ENCODE measurements at regions of chr14 and their contacts with region 1.

Region 1: DNA sequence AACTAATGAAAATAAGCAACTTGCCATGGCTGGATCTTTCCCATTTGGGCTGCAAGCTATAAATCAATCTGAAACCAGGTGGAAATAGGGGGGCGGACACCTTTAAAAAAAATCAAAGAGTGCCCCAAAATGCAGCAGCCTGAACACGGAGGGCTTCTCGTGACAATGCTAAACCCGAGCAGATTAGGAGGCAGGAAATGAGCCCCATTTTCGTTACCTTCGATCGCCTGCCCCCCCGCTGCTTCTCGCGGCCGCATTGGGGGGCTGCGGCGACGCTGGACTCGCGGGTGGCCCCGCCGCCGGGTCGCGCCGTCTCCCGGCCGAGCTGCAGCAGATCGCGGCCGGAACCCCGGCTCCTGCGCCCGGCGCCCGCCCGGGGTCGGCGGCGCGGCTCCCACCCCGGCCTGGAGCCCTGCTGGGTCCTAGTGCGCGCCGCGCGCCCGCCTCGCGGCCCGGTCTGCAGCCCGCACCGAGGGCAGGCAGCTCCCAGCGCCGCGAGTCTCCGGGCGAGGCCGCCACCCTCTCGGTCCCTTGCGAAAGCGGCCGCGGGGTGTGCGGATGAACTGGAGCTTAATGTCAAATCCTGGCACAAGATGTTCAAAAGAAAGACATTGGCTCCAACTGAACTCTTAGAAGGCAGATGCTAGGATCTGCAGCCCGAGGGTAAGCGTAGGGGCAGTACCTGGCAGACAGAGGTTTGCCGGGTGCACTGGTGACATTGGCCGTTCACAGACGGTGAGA is 201.9 kb upstream of the FOXN3 start:
- DNase-seq: peak; percentile 82
- ATAC-seq: peak; percentile 38
- H3K4me3 Mint-ChIP-seq: peak overlapping the region; percentile 95
- H3K27ac Mint-ChIP-seq: peak overlapping the region; percentile 94
- H3K4me1 Mint-ChIP-seq: peaks cover 70% of the 10 kb centered on the region
- H3K27me3 Mint-ChIP-seq: no peaks in the 10 kb centered on the region

Region 2: DNA sequence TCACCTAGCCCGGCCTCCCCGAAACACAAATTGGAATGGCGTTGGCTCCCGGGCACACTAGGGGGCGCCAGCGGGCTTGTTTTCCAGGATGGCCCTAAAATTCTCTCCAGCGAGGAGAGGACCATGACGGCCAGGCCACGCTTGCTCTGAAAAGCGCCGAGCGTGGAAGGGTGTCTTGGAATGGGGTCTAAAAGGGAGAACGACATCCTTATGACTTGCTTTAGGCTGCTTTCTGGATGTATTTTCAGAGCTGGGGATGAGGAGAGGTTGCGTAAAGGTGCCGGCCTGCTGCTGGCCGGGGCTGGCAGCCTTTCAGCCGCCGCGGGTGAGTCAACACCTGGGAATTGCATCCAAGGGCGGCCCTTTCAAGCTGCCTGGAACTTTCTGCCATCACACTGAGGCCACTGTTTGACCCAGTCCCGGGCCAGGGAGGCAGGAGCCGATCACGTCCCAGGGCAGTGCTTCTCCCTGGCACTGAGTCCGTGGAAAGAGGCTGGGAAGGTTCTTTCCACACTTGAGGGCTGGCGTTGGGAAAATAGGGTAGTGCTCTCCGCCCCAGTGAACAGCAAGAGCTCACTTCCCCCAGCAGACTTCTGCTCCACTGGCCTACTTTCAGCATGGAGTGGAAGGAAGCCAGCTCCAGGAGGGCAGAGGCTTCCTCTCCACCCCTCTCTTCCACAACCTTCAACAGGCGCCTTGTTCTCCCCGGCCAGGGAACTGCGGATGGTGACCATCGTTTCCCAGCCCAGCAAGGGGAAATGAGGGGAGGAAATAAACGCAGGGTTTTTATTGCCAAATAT is 578.3 kb before region 1 on chr14:
- CTCF ChIA-PET with region 1: no interaction called
- POLR2A ChIA-PET with region 1: no interaction called
- intact Hi-C with region 1: loop called in 1 of 2 experiments (anchors 5 kb)
- DNase-seq: peak; percentile 91
- ATAC-seq: peak; percentile 83
- H3K4me3 Mint-ChIP-seq: peak overlapping the region; percentile 59
- H3K27ac Mint-ChIP-seq: peak overlapping the region; percentile 81
- H3K4me1 Mint-ChIP-seq: peaks cover 11% of the 10 kb centered on the region
- H3K27me3 Mint-ChIP-seq: peaks cover 20% of the 10 kb centered on the region

Region 3: GRCh38 chr14:89430391-89431236 is 188.4 kb before region 1 on chr14:
- CTCF ChIA-PET with region 1: interaction called, 4 read pairs
- POLR2A ChIA-PET with region 1: interaction called, 4 read pairs
- intact Hi-C with region 1: loop called (anchors 2 kb)
- DNase-seq: peak; percentile 75
- ATAC-seq: peak; percentile 89
- H3K4me3 Mint-ChIP-seq: peak overlapping the region; percentile 71
- H3K27ac Mint-ChIP-seq: peak overlapping the region; percentile 94
- H3K4me1 Mint-ChIP-seq: peaks cover 70% of the 10 kb centered on the region
- H3K27me3 Mint-ChIP-seq: no peaks in the 10 kb centered on the region

Region 4: GRCh38 chr14:89509891-89510290 is 109.1 kb before region 1 on chr14:
- CTCF ChIA-PET with region 1: interaction called, 3 read pairs
- POLR2A ChIA-PET with region 1: no interaction called
- intact Hi-C with region 1: loop called (anchors 2 to 5 kb)
- DNase-seq: no peak
- ATAC-seq: no peak
- H3K4me3 Mint-ChIP-seq: peak overlapping the region; percentile 65
- H3K27ac Mint-ChIP-seq: peak overlapping the region; percentile 96
- H3K4me1 Mint-ChIP-seq: peaks cover 74% of the 10 kb centered on the region
- H3K27me3 Mint-ChIP-seq: no peaks in the 10 kb centered on the region

Region 5: GRCh38 chr14:89701211-89702043 is 82.4 kb after region 1 on chr14:
- CTCF ChIA-PET with region 1: interaction called, 3 read pairs
- POLR2A ChIA-PET with region 1: no interaction called
- intact Hi-C with region 1: loop called (anchors 1 to 5 kb)
- DNase-seq: peak; percentile 92
- ATAC-seq: peak; percentile 81
- H3K4me3 Mint-ChIP-seq: peak overlapping the region; percentile 65
- H3K27ac Mint-ChIP-seq: peak overlapping the region; percentile 83
- H3K4me1 Mint-ChIP-seq: peaks cover 49% of the 10 kb centered on the region
- H3K27me3 Mint-ChIP-seq: no peaks in the 10 kb centered on the region

Region 6: DNA sequence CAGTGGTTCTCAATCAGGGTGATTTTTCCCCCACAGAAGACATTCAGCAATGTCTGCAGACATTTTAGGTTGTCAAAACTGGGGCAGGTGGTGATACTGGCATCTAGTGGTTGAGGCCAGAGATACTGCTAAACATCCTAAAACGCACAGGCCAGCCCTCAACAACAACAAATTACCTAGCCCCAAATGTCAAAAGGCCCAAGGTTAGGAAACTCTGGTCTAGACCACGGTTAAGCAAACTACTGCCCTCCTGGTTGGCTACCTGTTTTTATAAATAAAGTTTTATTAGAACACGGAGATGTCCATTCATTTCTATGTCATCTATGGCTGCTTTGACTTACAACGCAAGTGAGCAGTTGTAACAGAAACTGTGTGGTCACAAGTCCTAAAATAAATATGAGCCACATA is 148.9 kb after region 1 on chr14:
- CTCF ChIA-PET with region 1: interaction called, 3 read pairs
- POLR2A ChIA-PET with region 1: no interaction called
- intact Hi-C with region 1: loop called (anchors 1 to 5 kb)
- DNase-seq: peak; percentile 78
- ATAC-seq: peak; percentile 95
- H3K4me3 Mint-ChIP-seq: peak overlapping the region; percentile 13
- H3K27ac Mint-ChIP-seq: peak overlapping the region; percentile 82
- H3K4me1 Mint-ChIP-seq: peaks cover 25% of the 10 kb centered on the region
- H3K27me3 Mint-ChIP-seq: peaks cover 2% of the 10 kb centered on the region

Region 7: GRCh38 chr14:90383075-90383730 is 764.2 kb after region 1 on chr14:
- CTCF ChIA-PET with region 1: no interaction called
- POLR2A ChIA-PET with region 1: no interaction called
- intact Hi-C with region 1: loop called in 1 of 2 experiments (anchors 5 kb)
- DNase-seq: peak; percentile 99
- ATAC-seq: peak; percentile 89
- H3K4me3 Mint-ChIP-seq: no peak overlapping the region
- H3K27ac Mint-ChIP-seq: no peak overlapping the region
- H3K4me1 Mint-ChIP-seq: peaks cover 27% of the 10 kb centered on the region
- H3K27me3 Mint-ChIP-seq: no peaks in the 10 kb centered on the region